T-cell (primary cell): ENCODE measurements at regions of chr4 and their contacts with region 1.

Region 1: GRCh38 chr4:40205259-40206198 is 8.7 kb downstream of the RHOH start:
- DNase-seq: peak in 2 of 35 experiments; percentile 48 to 63
- ATAC-seq: peak; percentile 34 to 50 (median 46)
- H3K4me3 ChIP-seq: peak overlapping the region; percentile 87 to 96
- H3K4me3 Mint-ChIP-seq: peak overlapping the region; percentile 96 to 99 (median 98)
- H3K27ac ChIP-seq: peak overlapping the region; percentile 99
- H3K27ac Mint-ChIP-seq: peak overlapping the region; percentile 93 to 96
- H3K4me1 ChIP-seq: peaks cover 55 to 58% of the 10 kb centered on the region in 2 experiments
- H3K4me1 Mint-ChIP-seq: peaks cover 62 to 82% (median 76%) of the 10 kb centered on the region in 3 donors
- H3K27me3 ChIP-seq: no peaks in the 10 kb centered on the region
- H3K27me3 Mint-ChIP-seq: no peaks in the 10 kb centered on the region

Region 2: GRCh38 chr4:39687014-39687413 is 518.5 kb before region 1 on chr4:
- CTCF ChIA-PET with region 1: no interaction called
- POLR2A ChIA-PET with region 1: no interaction called
- DNase-seq: no peak
- ATAC-seq: no peak
- H3K4me3 ChIP-seq: no peak overlapping the region
- H3K4me3 Mint-ChIP-seq: no peak overlapping the region
- H3K27ac ChIP-seq: no peak overlapping the region
- H3K27ac Mint-ChIP-seq: no peak overlapping the region
- H3K4me1 ChIP-seq: no peaks in the 10 kb centered on the region
- H3K4me1 Mint-ChIP-seq: no peaks in the 10 kb centered on the region
- H3K27me3 ChIP-seq: peaks cover 0 to 3% of the 10 kb centered on the region in 2 experiments
- H3K27me3 Mint-ChIP-seq: no peaks in the 10 kb centered on the region

Region 3: GRCh38 chr4:40193016-40193571 is 12.4 kb before region 1 on chr4:
- CTCF ChIA-PET with region 1: interaction called, 3 to 8 read pairs
- POLR2A ChIA-PET with region 1: interaction called, 8 to 47 read pairs
- DNase-seq: peak in 28 of 35 experiments; percentile 13 to 73 (median 45)
- ATAC-seq: peak; percentile 11 to 48 (median 46)
- H3K4me3 ChIP-seq: peak overlapping the region; percentile 33 to 43
- H3K4me3 Mint-ChIP-seq: peak overlapping the region; percentile 75 to 98 (median 96)
- H3K27ac ChIP-seq: peak overlapping the region; percentile 99
- H3K27ac Mint-ChIP-seq: peak overlapping the region; percentile 95 to 96
- H3K4me1 ChIP-seq: peaks cover 44 to 60% of the 10 kb centered on the region in 2 experiments
- H3K4me1 Mint-ChIP-seq: peaks cover 73 to 82% (median 75%) of the 10 kb centered on the region in 3 donors
- H3K27me3 ChIP-seq: no peaks in the 10 kb centered on the region
- H3K27me3 Mint-ChIP-seq: no peaks in the 10 kb centered on the region

Region 4: DNA sequence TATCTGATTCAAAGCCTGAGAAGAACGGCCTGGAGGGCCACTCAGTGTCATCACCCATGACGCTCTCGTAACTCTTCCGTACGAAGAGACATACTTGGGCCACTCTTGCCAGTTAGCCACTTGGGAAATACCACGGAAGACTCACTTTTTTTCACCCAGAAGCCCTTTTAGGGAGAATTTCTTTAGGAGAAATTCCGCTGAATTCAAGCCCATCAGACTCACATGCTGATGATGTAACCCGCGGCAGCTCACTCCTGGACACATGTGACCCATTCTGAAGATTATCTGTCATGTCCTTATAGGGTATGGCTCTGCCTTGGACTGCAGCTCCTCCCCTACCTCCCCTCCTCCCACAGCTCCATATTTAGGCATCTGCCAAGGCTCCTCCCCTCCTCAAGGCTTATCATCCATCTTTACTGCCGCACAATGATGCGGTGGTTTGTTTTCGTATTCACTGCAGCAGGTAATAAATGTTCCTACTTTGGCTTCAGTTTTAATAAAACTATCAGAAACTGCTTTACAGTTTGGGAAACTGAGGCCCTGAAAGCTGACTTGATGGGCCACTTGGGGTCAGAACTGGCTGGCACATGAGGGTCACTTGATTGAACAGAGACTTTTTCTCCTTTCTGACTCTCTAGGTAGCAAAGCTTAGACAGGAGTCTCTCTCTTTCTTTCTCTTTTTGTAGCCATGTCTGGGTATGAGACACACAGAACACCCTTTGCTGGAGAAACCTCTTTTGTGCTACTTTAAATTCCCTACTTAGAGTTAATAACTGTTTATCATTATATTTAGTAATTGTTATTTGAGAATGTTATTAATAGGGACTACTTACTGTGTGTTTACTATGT is 33.4 kb after region 1 on chr4:
- CTCF ChIA-PET with region 1: interaction called in 1 of 2 experiments, 5 read pairs
- POLR2A ChIA-PET with region 1: interaction called, 5 to 45 read pairs
- DNase-seq: peak in 34 of 35 experiments; percentile 56 to 92 (median 79)
- ATAC-seq: peak; percentile 86 to 94 (median 92)
- H3K4me3 ChIP-seq: peak overlapping the region; percentile 28 to 29
- H3K4me3 Mint-ChIP-seq: peak overlapping the region; percentile 67 to 76 (median 73)
- H3K27ac ChIP-seq: peak overlapping the region; percentile 97
- H3K27ac Mint-ChIP-seq: peak overlapping the region; percentile 93 to 95
- H3K4me1 ChIP-seq: peaks cover 67 to 99% of the 10 kb centered on the region in 2 experiments
- H3K4me1 Mint-ChIP-seq: peaks cover 91 to 95% (median 94%) of the 10 kb centered on the region in 3 donors
- H3K27me3 ChIP-seq: no peaks in the 10 kb centered on the region
- H3K27me3 Mint-ChIP-seq: no peaks in the 10 kb centered on the region